Activated CD4-positive, alpha-beta memory T cell treated with anti-CD3 and anti-CD28 coated beads, Interleukin-2, amount 10 ng/mL, durations not matched to agents 7 days and 5 days (primary cell): ENCODE measurements at regions of chr6 and their contacts with region 1.

Region 1: GRCh38 chr6:136792410-136793262 is at the start of gene MAP3K5:
- DNase-seq: peak; percentile 95
- H3K4me3 Mint-ChIP-seq: peak within 1 kb of the TSS; percentile 93
- H3K27ac Mint-ChIP-seq: peak within 1 kb of the TSS; percentile 91
- H3K4me1 Mint-ChIP-seq: peaks cover 31% of the 10 kb centered on the region
- H3K27me3 Mint-ChIP-seq: peaks cover 3% of the 10 kb centered on the region
- total RNA-seq, gene MAP3K5: 25.4 to 25.9 TPM

Region 2: GRCh38 chr6:136289579-136290409 is 502.8 kb before region 1 on chr6 and contains the start of gene BCLAF1:
- CTCF ChIA-PET with region 1: interaction called, 5 read pairs
- POLR2A ChIA-PET with region 1: interaction called, 43 read pairs
- DNase-seq: peak; percentile 100
- H3K4me3 Mint-ChIP-seq: peak within 1 kb of the TSS; percentile 94
- H3K27ac Mint-ChIP-seq: peak within 1 kb of the TSS; percentile 100
- H3K4me1 Mint-ChIP-seq: peaks cover 46% of the 10 kb centered on the region
- H3K27me3 Mint-ChIP-seq: no peaks in the 10 kb centered on the region
- total RNA-seq, gene BCLAF1: 128 to 132 TPM

Region 3: GRCh38 chr6:136600818-136601217 is 191.8 kb before region 1 on chr6:
- CTCF ChIA-PET with region 1: interaction called, 11 read pairs
- POLR2A ChIA-PET with region 1: no interaction called
- DNase-seq: no peak
- H3K4me3 Mint-ChIP-seq: no peak overlapping the region
- H3K27ac Mint-ChIP-seq: no peak overlapping the region
- H3K4me1 Mint-ChIP-seq: peaks cover 4% of the 10 kb centered on the region
- H3K27me3 Mint-ChIP-seq: no peaks in the 10 kb centered on the region

Region 4: DNA sequence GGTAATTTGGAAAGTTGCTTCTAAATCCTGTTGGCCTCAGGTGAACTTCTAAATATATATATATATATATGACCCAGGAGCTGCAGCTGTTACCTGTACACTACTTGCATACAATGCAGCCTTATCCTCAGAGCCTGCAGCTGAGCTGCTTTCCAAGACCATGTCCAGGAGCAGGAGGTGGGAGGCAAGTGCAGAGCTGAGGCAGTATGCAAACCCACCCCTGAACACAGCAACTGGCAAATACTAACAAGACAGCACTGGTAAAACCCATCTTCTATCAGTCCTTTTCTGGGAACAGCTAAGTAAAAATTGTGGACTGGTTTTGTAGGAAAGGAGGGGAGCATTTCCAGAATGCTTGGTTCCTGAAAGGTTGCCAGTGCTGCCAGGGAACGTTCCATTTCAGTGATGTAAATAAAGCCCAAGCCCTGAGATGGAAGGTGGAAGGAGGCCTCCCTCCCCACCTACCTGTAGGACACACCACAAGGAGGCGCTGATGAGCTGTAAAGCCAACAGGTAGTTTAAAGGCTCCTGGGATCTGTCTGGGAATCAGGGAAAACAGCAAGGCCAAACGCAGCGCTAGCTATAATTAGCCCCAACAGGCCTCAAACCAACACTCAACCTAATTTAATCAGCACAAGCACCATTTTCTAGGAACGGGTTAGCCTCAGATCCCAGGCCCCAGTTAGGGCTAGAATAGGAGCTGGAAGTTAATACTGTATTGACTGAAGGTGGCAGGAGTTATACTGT is 148.6 kb before region 1 on chr6:
- CTCF ChIA-PET with region 1: interaction called, 600 read pairs
- POLR2A ChIA-PET with region 1: interaction called, 237 read pairs
- DNase-seq: peak; percentile 82
- H3K4me3 Mint-ChIP-seq: no peak overlapping the region
- H3K27ac Mint-ChIP-seq: no peak overlapping the region
- H3K4me1 Mint-ChIP-seq: peaks cover 8% of the 10 kb centered on the region
- H3K27me3 Mint-ChIP-seq: no peaks in the 10 kb centered on the region

Region 5: GRCh38 chr6:136701045-136701444 is 91.6 kb before region 1 on chr6:
- CTCF ChIA-PET with region 1: interaction called, 9 read pairs
- POLR2A ChIA-PET with region 1: interaction called, 16 read pairs
- DNase-seq: no peak
- H3K4me3 Mint-ChIP-seq: no peak overlapping the region
- H3K27ac Mint-ChIP-seq: no peak overlapping the region
- H3K4me1 Mint-ChIP-seq: peaks cover 50% of the 10 kb centered on the region
- H3K27me3 Mint-ChIP-seq: no peaks in the 10 kb centered on the region

Region 6: GRCh38 chr6:136751522-136751956 is 41.1 kb before region 1 on chr6:
- CTCF ChIA-PET with region 1: interaction called, 80 read pairs
- POLR2A ChIA-PET with region 1: interaction called, 62 read pairs
- DNase-seq: peak; percentile 55
- H3K4me3 Mint-ChIP-seq: peak overlapping the region; percentile 51
- H3K27ac Mint-ChIP-seq: peak overlapping the region; percentile 91
- H3K4me1 Mint-ChIP-seq: peaks cover 78% of the 10 kb centered on the region
- H3K27me3 Mint-ChIP-seq: no peaks in the 10 kb centered on the region

Region 7: GRCh38 chr6:136822376-136823127 is 29.9 kb after region 1 on chr6 and contains the start of gene PEX7:
- CTCF ChIA-PET with region 1: interaction called, 19 read pairs
- POLR2A ChIA-PET with region 1: interaction called, 4 read pairs
- DNase-seq: peak; percentile 90
- H3K4me3 Mint-ChIP-seq: peak within 1 kb of the TSS; percentile 82
- H3K27ac Mint-ChIP-seq: peak within 1 kb of the TSS; percentile 67
- H3K4me1 Mint-ChIP-seq: peaks cover 18% of the 10 kb centered on the region
- H3K27me3 Mint-ChIP-seq: peaks cover 7% of the 10 kb centered on the region
- total RNA-seq, gene PEX7: 4.5 to 4.8 TPM